ENCODE measurements at regions of chr3 and their contacts with region 1.

Region 1: GRCh38 chr3:78659386-78659987 is 1108.3 kb downstream of the ROBO1 start:
- DNase-seq: peak in 1 of 2 experiments; percentile 54
- ATAC-seq: no peak
- H3K4me3 ChIP-seq: no peak overlapping the region
- H3K27ac ChIP-seq: no peak overlapping the region
- H3K4me1 ChIP-seq: no peaks in the 10 kb centered on the region
- CTCF ChIP-seq: peak; percentile 81
- EP300 ChIP-seq: no peak
- POLR2A ChIP-seq: no peak
- RAD21 ChIP-seq: peak; percentile 76 to 94

Region 2: GRCh38 chr3:78736863-78737262 is 77.4 kb after region 1 on chr3:
- CTCF ChIA-PET with region 1: no interaction called
- POLR2A ChIA-PET with region 1: no interaction called
- DNase-seq: peak in 1 of 2 experiments; percentile 43
- ATAC-seq: peak; percentile 57 to 78
- H3K4me3 ChIP-seq: no peak overlapping the region
- H3K27ac ChIP-seq: peak overlapping the region in 1 of 2 experiments; percentile 38; a peak in 1 of 6 replicates
- H3K4me1 ChIP-seq: peaks cover 4% of the 10 kb centered on the region; the same call in 1 of the 3 replicates
- CTCF ChIP-seq: no peak
- EP300 ChIP-seq: peak in 1 of 2 experiments; percentile 65; a peak in 1 of 5 replicates
- POLR2A ChIP-seq: no peak
- RAD21 ChIP-seq: no peak

Region 3: DNA sequence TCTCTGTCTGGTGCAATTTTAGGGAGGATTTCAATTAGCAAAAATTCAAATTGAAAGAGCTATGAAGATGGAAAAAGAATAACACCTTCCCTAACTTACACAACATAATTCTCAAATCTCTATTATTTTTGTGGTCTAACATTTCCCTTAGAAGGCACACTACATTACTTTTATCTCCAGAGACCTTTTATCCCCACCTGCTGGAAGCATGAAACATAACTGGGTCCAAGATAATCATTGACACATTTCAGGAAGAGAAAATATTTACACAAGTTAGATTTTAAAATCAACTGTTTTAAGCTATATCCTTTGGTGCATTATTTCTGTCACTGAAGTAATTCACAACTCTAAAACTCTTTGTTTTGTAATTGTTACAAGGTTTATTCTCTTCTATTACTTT is 328.8 kb after region 1 on chr3:
- CTCF ChIA-PET with region 1: interaction called, 20 read pairs
- POLR2A ChIA-PET with region 1: no interaction called
- DNase-seq: peak; percentile 16 to 33
- ATAC-seq: peak in 1 of 2 experiments; percentile 68; a peak in 2 of 6 replicates
- H3K4me3 ChIP-seq: no peak overlapping the region
- H3K27ac ChIP-seq: no peak overlapping the region
- H3K4me1 ChIP-seq: peaks cover 4% of the 10 kb centered on the region; the same call in 1 of the 3 replicates
- CTCF ChIP-seq: peak; percentile 49
- EP300 ChIP-seq: no peak
- POLR2A ChIP-seq: no peak
- RAD21 ChIP-seq: peak; percentile 65

Region 4: GRCh38 chr3:79032686-79033318 is 373.3 kb after region 1 on chr3:
- CTCF ChIA-PET with region 1: interaction called, 18 read pairs
- POLR2A ChIA-PET with region 1: no interaction called
- DNase-seq: peak in 1 of 2 experiments; percentile 69
- ATAC-seq: peak; percentile 47 to 71; a peak in 3 of 6 replicates
- H3K4me3 ChIP-seq: no peak overlapping the region
- H3K27ac ChIP-seq: no peak overlapping the region
- H3K4me1 ChIP-seq: no peaks in the 10 kb centered on the region; the same call in 2 of the 3 replicates
- CTCF ChIP-seq: peak; percentile 65
- EP300 ChIP-seq: no peak
- POLR2A ChIP-seq: no peak
- RAD21 ChIP-seq: peak; percentile 82 to 86

Measured in A549 (cell line).